ENCODE measurements at regions of chr4 and their contacts with region 1.

Region 1: GRCh38 chr4:48340965-48341775 is at the start of gene SLAIN2:
- DNase-seq: peak; percentile 100
- H3K4me3 Mint-ChIP-seq: peak within 1 kb of the TSS; percentile 100
- H3K27ac Mint-ChIP-seq: peak within 1 kb of the TSS; percentile 98
- H3K4me1 Mint-ChIP-seq: peaks cover 55% of the 10 kb centered on the region
- H3K27me3 Mint-ChIP-seq: no peaks in the 10 kb centered on the region
- total RNA-seq, gene SLAIN2: 77.6 and 80.2 TPM in 2 replicates

Region 2: DNA sequence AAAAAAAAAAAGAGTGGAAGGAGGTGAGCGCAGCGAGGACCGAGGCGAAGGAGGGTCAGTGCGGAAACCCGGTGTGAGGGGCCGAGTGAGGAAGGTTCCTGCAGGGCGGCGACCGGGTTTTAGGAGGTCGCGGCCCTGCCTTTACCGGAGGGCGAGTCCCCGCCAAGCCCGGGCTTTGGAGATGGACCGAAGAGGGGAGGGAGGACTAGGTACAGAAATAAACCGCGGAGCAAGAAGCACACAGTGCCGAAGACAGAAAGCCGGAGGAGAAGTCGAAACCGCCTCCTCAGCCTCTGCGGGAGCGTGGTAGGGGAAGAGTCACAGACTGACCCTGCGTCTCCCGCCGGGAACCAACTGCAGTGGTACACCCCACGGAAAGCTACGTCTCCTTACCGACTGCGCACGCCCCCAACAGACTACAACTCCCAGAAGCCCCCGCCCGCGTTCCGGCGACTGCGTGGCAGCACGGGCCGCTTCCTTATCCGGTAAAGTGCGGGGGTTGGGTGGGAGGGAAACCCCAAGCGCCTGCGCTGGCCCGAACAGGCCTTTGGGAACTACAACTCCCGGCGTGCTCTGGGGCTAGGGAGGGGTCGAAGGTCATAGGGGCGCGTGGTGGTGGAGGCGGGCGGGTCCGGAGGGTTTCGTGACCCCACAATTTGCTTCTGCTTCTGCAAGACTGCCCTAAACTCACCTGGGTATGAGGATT is 426.8 kb before region 1 on chr4 and contains the start of gene NFXL1:
- intact Hi-C with region 1: loop called (anchors 5 kb)
- DNase-seq: peak; percentile 98
- H3K4me3 Mint-ChIP-seq: peak within 1 kb of the TSS; percentile 84
- H3K27ac Mint-ChIP-seq: peak within 1 kb of the TSS; percentile 91
- H3K4me1 Mint-ChIP-seq: peaks cover 25% of the 10 kb centered on the region
- H3K27me3 Mint-ChIP-seq: peaks cover 7% of the 10 kb centered on the region
- total RNA-seq, gene NFXL1: 11.2 and 15.0 TPM in 2 replicates

Region 3: DNA sequence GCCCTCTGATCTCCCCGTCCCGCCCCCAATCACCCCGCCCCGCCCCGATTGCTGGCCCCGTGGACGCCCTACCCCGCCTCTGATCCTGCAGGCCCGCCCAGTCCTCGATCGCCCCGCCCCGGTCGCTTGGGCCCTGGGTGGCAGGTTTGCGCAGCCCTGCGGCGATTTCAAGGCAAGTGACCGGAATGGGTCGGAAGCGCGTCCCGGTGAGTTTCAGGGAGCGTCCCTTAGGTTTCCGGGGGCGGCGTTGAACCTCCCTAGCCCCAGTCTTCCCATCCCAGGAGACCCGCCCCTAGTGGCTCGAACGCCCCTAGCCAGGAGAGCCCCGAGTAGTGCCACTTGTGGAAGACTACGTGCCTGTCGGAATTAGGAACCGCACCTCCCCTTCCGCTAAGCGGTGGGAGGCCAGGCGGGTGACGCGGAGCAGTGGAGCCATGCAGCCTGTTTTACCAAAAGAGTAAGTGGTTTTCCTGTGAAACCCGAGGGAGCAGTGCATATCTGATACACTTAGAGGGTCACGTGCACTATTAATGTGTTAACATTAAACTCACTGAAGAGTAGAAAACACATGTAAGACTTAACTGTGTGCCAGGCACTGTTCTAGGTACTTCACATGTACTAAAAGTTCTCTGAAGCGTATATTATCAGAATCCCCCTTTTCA is 71.2 kb before region 1 on chr4:
- intact Hi-C with region 1: loop called (anchors 1 kb)
- DNase-seq: peak; percentile 95
- H3K4me3 Mint-ChIP-seq: peak overlapping the region; percentile 97
- H3K27ac Mint-ChIP-seq: peak overlapping the region; percentile 88
- H3K4me1 Mint-ChIP-seq: peaks cover 20% of the 10 kb centered on the region
- H3K27me3 Mint-ChIP-seq: no peaks in the 10 kb centered on the region

Region 4: GRCh38 chr4:48356355-48356754 is 15.2 kb after region 1 on chr4:
- intact Hi-C with region 1: loop called (anchors 1 kb)
- DNase-seq: no peak
- H3K4me3 Mint-ChIP-seq: no peak overlapping the region
- H3K27ac Mint-ChIP-seq: no peak overlapping the region
- H3K4me1 Mint-ChIP-seq: peaks cover 17% of the 10 kb centered on the region
- H3K27me3 Mint-ChIP-seq: no peaks in the 10 kb centered on the region

Region 5: GRCh38 chr4:48830706-48831531 is 489.7 kb after region 1 on chr4 and contains the start of gene OCIAD1:
- intact Hi-C with region 1: loop called (anchors 1 kb)
- DNase-seq: peak; percentile 98
- H3K4me3 Mint-ChIP-seq: peak within 1 kb of the TSS; percentile 97
- H3K27ac Mint-ChIP-seq: peak within 1 kb of the TSS; percentile 100
- H3K4me1 Mint-ChIP-seq: peaks cover 20% of the 10 kb centered on the region
- H3K27me3 Mint-ChIP-seq: peaks cover 2% of the 10 kb centered on the region
- total RNA-seq, gene OCIAD1: 116 and 130 TPM in 2 replicates

Measured in activated CD4-positive, alpha-beta T cell treated with anti-CD3 and anti-CD28 coated beads, Interleukin-2, amount 10 ng/mL, durations not matched to agents 24 days and 14 days (primary cell).